ENCODE measurements at regions of chr3 and their contacts with region 1.

Region 1: DNA sequence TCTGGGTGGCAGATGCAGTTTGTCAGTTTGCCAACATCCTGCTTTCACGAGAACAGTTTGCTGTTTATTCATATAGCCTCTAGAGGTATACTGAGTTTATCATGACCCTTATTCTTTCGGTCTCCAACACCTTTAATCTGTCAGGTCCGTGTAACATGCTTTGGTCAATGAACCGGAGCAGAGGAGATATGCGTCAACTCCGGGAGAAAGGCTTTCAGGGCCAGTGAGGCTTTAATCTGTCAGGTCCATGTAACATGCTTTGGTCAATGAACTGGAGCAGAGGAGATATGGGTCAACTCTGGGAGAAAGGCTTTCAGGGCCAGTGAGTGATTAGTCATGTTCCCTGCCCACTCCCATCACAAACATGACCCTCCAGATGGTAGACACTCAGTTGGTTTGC is 16.9 kb upstream of the GPD1L start:
- DNase-seq: no peak
- H3K4me3 ChIP-seq: no peak overlapping the region
- H3K27ac ChIP-seq: no peak overlapping the region
- H3K4me1 ChIP-seq: no peaks in the 10 kb centered on the region
- H3K27me3 ChIP-seq: no peaks in the 10 kb centered on the region
- CTCF ChIP-seq: no peak

Region 2: GRCh38 chr3:31777092-31777491 is 312.4 kb before region 1 on chr3:
- CTCF ChIA-PET with region 1: no interaction called
- POLR2A ChIA-PET with region 1: interaction called, 18 read pairs
- intact Hi-C with region 1: no loop called
- DNase-seq: no peak
- H3K4me3 ChIP-seq: no peak overlapping the region
- H3K27ac ChIP-seq: no peak overlapping the region
- H3K4me1 ChIP-seq: peaks cover 4% of the 10 kb centered on the region
- H3K27me3 ChIP-seq: no peaks in the 10 kb centered on the region
- CTCF ChIP-seq: no peak